Heart right ventricle (tissue), 16 donors: ENCODE measurements at regions of chr17 and their contacts with region 1.

Region 1: GRCh38 chr17:31696184-31696602 is 162.9 kb downstream of the COPRS start:
- DNase-seq: peak; percentile 81 to 82
- ATAC-seq: peak; percentile 91 to 97 (median 93)
- H3K4me3 ChIP-seq: no peak overlapping the region
- H3K27ac ChIP-seq: peak overlapping the region in 9 of 10 donors; percentile 41 to 88 (median 75)
- H3K4me1 ChIP-seq: peaks cover 8 to 59% (median 51%) of the 10 kb centered on the region in 9 donors
- H3K27me3 ChIP-seq: no peaks in the 10 kb centered on the region
- CTCF ChIP-seq: peak in 5 of 9 donors; percentile 23 to 33 (median 30)

Region 2: GRCh38 chr17:31357831-31358394 is 338.3 kb before region 1 on chr17:
- intact Hi-C with region 1: no loop called
- DNase-seq: no peak
- ATAC-seq: no peak
- H3K4me3 ChIP-seq: no peak overlapping the region
- H3K27ac ChIP-seq: no peak overlapping the region
- H3K4me1 ChIP-seq: no peaks in the 10 kb centered on the region
- H3K27me3 ChIP-seq: no peaks in the 10 kb centered on the region
- CTCF ChIP-seq: no peak

Region 3: GRCh38 chr17:31558748-31559644 is 137.2 kb before region 1 on chr17:
- intact Hi-C with region 1: loop called in 5 of 10 experiments (anchors 5 to 10 kb)
- DNase-seq: peak; percentile 80 to 84
- ATAC-seq: peak; percentile 85 to 94 (median 90)
- H3K4me3 ChIP-seq: peak overlapping the region; percentile 58 to 89 (median 72)
- H3K27ac ChIP-seq: peak overlapping the region; percentile 57 to 97 (median 94)
- H3K4me1 ChIP-seq: peaks cover 11 to 47% (median 29%) of the 10 kb centered on the region in 9 donors
- H3K27me3 ChIP-seq: no peaks in the 10 kb centered on the region
- CTCF ChIP-seq: peak; percentile 80 to 99 (median 91)

Region 4: DNA sequence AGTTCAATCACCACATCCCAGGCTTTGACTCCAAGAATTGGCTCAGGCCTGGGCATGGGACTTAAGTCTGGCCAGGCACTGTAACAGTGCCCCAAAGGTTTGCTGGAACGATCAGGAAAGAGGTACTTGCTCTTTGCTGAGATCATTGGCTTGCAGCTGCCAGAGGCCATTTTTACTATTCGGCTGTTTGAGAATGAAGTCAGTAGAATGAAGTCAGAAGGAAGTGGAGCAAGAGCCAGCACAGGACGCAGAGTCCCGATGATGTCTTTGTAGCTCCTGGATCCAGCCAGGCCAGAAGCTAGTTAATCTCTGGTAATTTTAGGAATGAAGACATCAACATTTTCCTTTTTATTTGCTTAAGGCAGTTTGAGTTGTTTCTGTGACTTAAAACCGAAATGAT is 109.2 kb before region 1 on chr17:
- intact Hi-C with region 1: loop called in 1 of 10 experiments (anchors 5 kb)
- DNase-seq: no peak
- ATAC-seq: peak in 2 of 8 donors; percentile 52 to 58
- H3K4me3 ChIP-seq: no peak overlapping the region
- H3K27ac ChIP-seq: peak overlapping the region in 1 of 10 donors; percentile 46
- H3K4me1 ChIP-seq: peaks cover 0 to 34% (median 11%) of the 10 kb centered on the region in 9 donors
- H3K27me3 ChIP-seq: no peaks in the 10 kb centered on the region
- CTCF ChIP-seq: no peak

Region 5: DNA sequence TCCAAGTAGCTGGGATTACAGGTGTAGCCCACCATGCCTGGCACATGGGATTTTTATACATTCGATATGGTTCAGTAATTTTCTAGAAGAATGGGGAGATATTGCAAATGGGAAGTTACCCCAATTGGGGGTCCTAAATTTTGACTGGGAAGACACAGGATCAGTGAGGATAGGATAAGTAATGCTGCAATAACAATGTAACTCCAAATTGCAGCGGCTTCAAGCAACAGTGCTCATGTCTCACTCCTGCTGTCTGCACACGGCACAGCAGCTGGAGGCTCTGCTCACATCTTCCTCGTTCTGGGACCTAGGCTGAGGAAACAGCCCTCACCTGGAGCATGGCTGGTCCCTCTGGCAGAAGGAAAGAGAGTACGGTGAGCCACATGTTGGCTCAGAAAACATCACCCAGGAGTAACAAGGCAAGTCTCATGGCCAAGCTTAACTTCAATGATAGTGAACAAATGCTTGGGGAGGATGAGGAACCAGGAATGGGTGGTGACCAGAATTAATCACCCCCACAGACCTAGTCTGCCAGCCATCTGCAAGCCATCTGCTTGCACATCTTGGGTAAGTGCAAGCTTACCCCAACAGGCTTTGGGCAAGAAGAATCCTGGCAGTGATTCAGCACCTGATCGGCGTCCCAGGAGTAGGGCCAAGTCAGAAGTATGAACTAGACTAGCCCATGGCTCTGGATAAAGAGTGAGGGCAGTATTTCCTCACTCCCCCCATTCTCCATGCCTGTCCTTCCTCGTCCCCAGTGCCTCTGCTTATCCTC is 66.3 kb before region 1 on chr17:
- intact Hi-C with region 1: loop called in 1 of 10 experiments (anchors 10 kb)
- DNase-seq: no peak
- ATAC-seq: no peak
- H3K4me3 ChIP-seq: no peak overlapping the region
- H3K27ac ChIP-seq: no peak overlapping the region
- H3K4me1 ChIP-seq: no peaks in the 10 kb centered on the region
- H3K27me3 ChIP-seq: no peaks in the 10 kb centered on the region
- CTCF ChIP-seq: no peak

Region 6: DNA sequence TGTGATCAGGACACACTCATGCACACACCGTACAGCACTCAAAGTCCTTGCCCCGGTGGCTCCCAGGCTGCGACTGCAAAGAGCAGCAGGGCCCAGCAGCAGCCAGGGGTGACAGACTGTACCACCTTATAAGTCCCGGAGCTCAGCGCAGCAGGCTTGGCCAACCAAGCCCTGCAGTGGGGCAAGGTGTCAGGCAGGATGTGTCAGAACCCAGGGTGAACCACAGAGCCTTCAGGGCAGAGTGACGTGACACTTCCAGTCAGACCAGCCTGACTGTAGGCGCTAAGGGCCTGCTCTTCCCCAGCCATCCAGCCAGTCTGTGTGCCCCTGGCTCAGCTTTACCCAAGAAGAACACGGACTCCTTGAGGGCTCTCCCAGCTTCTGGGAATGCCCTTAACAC is 41.3 kb before region 1 on chr17:
- intact Hi-C with region 1: no loop called
- DNase-seq: peak in 1 of 2 donors; percentile 12
- ATAC-seq: peak in 3 of 8 donors; percentile 7 to 60 (median 29)
- H3K4me3 ChIP-seq: no peak overlapping the region
- H3K27ac ChIP-seq: no peak overlapping the region
- H3K4me1 ChIP-seq: no peaks in the 10 kb centered on the region
- H3K27me3 ChIP-seq: no peaks in the 10 kb centered on the region
- CTCF ChIP-seq: no peak

Region 7: DNA sequence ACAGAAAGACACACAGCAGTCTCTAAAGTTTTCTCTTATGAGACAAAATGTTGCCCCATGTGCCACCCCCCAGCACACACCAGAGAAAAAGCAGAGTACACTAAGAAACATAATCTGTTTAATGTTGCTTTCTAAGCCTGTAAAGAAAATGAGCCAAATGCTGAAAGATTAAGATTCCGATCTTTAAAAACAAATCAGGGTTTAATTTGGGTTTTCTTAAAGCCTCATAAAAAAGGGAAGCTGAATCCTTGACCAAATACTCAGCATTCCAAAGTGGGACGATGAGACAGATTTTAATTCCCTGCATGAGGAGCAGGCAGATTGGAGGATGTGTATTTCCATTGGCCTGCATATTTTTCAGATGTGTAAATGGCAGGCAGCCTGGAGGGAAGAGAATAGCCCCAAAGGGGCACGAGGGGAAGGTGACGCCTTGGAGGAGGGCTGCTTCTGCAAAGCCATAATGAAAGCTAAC is 44.5 kb after region 1 on chr17:
- intact Hi-C with region 1: loop called in 5 of 10 experiments (anchors 1 to 5 kb)
- DNase-seq: no peak
- ATAC-seq: no peak
- H3K4me3 ChIP-seq: no peak overlapping the region
- H3K27ac ChIP-seq: peak overlapping the region in 8 of 10 donors; percentile 1 to 79 (median 60)
- H3K4me1 ChIP-seq: peaks cover 7 to 65% (median 48%) of the 10 kb centered on the region in 9 donors
- H3K27me3 ChIP-seq: no peaks in the 10 kb centered on the region
- CTCF ChIP-seq: no peak